ENCODE measurements at regions of chr3 and their contacts with region 1.

Region 1: DNA sequence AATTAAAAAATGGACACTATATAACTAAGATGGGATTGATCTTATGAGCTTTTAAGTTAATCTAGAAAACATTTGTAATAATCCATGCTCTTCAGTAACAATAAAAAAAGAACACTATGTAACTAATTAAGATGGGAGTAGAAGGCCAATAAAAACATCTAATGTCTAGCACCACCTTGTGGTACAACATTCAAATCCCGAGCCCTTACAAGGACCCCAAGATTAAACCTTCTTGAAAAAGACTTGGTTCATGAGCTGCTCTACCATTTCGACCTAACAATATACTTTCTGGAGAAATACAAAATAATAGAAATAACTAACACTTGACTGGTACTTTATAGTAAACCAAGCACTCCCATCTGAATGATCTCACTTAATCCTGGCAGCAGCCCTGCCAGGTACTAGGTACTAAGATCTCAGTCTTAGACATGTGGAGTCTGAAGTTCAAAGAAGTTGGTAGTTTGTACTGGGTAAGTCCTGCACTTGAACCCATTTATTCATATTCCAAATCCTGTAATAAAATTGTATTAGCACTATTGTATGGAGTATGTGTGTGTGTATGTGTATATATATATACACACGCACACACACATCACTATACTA is 21.8 kb downstream of the METTL6 start:
- DNase-seq: peak; percentile 23
- H3K4me3 ChIP-seq: no peak overlapping the region
- H3K27ac ChIP-seq: no peak overlapping the region
- H3K27me3 ChIP-seq: no peaks in the 10 kb centered on the region
- CTCF ChIP-seq: peak; percentile 68

Region 2: DNA sequence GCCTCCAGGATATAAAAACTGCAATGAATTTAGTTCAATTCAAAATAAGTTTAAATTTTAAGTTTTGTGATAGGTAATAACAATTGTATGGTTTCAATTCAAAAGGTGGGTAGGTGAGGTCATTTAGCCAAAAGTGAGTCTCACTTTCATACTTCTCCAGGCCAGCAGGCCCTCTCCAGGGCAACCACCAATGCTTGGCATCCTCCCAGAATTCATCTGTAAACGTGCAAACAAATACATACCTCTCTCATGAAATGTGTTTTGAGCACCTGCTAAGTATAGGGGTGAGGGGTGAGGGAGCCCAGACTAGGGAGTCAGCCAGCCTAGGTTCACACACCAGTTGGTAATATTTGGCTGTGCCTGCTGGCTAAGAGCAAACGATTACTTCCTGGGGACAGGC is 284.6 kb before region 1 on chr3:
- CTCF ChIA-PET with region 1: interaction called, 15 read pairs
- POLR2A ChIA-PET with region 1: no interaction called
- DNase-seq: no peak
- H3K4me3 ChIP-seq: no peak overlapping the region
- H3K27ac ChIP-seq: no peak overlapping the region
- H3K27me3 ChIP-seq: peaks cover 5% of the 10 kb centered on the region
- CTCF ChIP-seq: no peak

Region 3: GRCh38 chr3:15241341-15241740 is 164.2 kb before region 1 on chr3:
- CTCF ChIA-PET with region 1: interaction called, 14 read pairs
- POLR2A ChIA-PET with region 1: no interaction called
- DNase-seq: no peak
- H3K4me3 ChIP-seq: no peak overlapping the region
- H3K27ac ChIP-seq: no peak overlapping the region
- H3K27me3 ChIP-seq: no peaks in the 10 kb centered on the region
- CTCF ChIP-seq: 0 out of 2 replicates have a peak, but pooled peaks have one; percentile 26

Region 4: GRCh38 chr3:15332405-15333098 is 73.0 kb before region 1 on chr3 and contains the start of gene SH3BP5:
- CTCF ChIA-PET with region 1: interaction called, 12 read pairs
- POLR2A ChIA-PET with region 1: no interaction called
- DNase-seq: no peak
- H3K4me3 ChIP-seq: peak within 1 kb of the TSS; percentile 87
- H3K27ac ChIP-seq: no peak within 1 kb of the TSS
- H3K27me3 ChIP-seq: no peaks in the 10 kb centered on the region
- CTCF ChIP-seq: peak; percentile 56
- polyA plus RNA-seq, gene SH3BP5: 15.5 and 16.6 TPM in 2 replicates

Region 5: GRCh38 chr3:15420871-15421270 is 15.3 kb after region 1 on chr3:
- CTCF ChIA-PET with region 1: interaction called, 14 read pairs
- POLR2A ChIA-PET with region 1: no interaction called
- DNase-seq: no peak
- H3K4me3 ChIP-seq: no peak overlapping the region
- H3K27ac ChIP-seq: no peak overlapping the region
- H3K27me3 ChIP-seq: no peaks in the 10 kb centered on the region
- CTCF ChIP-seq: no peak

Region 6: DNA sequence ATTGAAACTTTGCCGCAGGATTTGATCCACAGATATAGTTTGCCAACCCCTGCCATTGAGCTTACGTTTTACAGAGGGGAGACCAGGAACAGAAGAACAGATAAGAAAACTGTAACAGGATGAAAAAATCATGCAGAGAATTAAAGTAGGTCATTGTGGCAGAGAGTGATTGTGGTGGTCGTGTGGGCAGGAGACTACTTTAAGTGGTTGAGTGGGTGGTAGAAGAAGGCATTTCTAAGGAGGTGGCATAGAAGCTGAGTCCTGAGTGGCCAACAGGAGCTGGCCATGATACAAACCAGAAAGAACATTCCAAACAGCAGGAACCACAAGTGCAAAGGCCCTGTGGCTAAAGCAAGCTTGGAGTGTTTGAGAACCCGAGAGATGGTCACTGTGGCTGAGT is 81.4 kb after region 1 on chr3:
- CTCF ChIA-PET with region 1: no interaction called
- POLR2A ChIA-PET with region 1: no interaction called
- DNase-seq: no peak
- H3K4me3 ChIP-seq: no peak overlapping the region
- H3K27ac ChIP-seq: no peak overlapping the region
- H3K27me3 ChIP-seq: no peaks in the 10 kb centered on the region
- CTCF ChIP-seq: no peak

Region 7: DNA sequence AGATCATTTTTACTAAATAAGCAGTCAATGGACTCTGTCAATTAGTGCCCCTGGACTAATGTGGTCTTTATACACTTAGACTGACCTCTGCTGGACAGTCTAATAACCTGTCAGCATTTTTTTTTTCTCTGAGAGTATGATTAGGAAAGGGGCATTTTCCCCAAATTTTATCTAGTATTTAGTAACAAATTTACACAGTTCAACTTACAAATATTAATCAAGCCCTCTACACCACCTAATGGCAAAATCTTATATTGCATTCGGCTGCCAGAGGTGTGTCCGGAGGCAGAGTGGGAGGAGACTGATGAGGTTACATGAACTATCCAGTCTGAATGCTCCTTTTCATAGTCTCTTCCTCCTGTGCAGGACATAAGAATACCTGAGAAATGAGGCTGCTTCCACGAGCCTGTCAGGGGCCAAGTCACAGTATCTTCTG is 152.0 kb after region 1 on chr3:
- CTCF ChIA-PET with region 1: interaction called, 16 read pairs
- POLR2A ChIA-PET with region 1: no interaction called
- DNase-seq: peak; percentile 39
- H3K4me3 ChIP-seq: no peak overlapping the region
- H3K27ac ChIP-seq: no peak overlapping the region
- H3K27me3 ChIP-seq: no peaks in the 10 kb centered on the region
- CTCF ChIP-seq: peak; percentile 67

Region 8: DNA sequence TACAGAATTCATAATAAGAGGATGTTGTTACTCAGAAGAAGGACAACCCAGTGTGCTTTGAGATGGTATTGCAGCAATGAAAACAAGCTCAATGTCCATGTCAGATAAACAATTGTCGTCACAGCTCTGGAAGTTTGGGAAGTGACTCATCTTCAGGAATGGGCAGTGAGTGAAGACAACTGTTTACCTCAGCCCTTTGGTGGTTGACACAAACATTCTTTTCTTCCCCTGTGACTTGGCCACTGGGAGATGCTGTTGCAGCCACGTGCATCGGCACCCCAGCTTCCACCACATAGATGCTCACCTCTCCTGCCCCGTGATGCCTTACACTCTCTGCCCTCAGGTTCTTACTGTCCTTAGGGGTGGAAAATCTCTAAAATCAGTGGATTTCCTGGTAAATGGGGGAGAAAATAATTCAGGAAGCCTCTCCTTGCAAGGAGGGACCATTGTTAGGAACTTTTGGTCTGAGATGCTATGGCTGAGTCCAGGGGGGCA is 654.9 kb after region 1 on chr3:
- CTCF ChIA-PET with region 1: no interaction called
- POLR2A ChIA-PET with region 1: no interaction called
- DNase-seq: peak; percentile 99
- H3K4me3 ChIP-seq: peak overlapping the region; percentile 29; the same call in 1 of the 2 replicates
- H3K27ac ChIP-seq: peak overlapping the region; percentile 100
- H3K27me3 ChIP-seq: no peaks in the 10 kb centered on the region
- CTCF ChIP-seq: peak; percentile 43